Activated naive CD4-positive, alpha-beta T cell treated with anti-CD3 and anti-CD28 coated beads, Interleukin-2, amount 10 ng/mL, durations not matched to agents 7 days and 5 days (primary cell): ENCODE measurements at regions of chr18 and their contacts with region 1.

Region 1: GRCh38 chr18:8654503-8655451 is 45.5 kb downstream of the RAB12 start:
- DNase-seq: no peak
- H3K4me3 Mint-ChIP-seq: no peak overlapping the region
- H3K27ac Mint-ChIP-seq: no peak overlapping the region
- H3K4me1 Mint-ChIP-seq: no peaks in the 10 kb centered on the region
- H3K27me3 Mint-ChIP-seq: peaks cover 22% of the 10 kb centered on the region

Region 2: GRCh38 chr18:8643326-8643878 is 11.4 kb before region 1 on chr18:
- CTCF ChIA-PET with region 1: interaction called, 17 read pairs
- DNase-seq: no peak
- H3K4me3 Mint-ChIP-seq: no peak overlapping the region
- H3K27ac Mint-ChIP-seq: no peak overlapping the region
- H3K4me1 Mint-ChIP-seq: no peaks in the 10 kb centered on the region
- H3K27me3 Mint-ChIP-seq: peaks cover 14% of the 10 kb centered on the region

Region 3: DNA sequence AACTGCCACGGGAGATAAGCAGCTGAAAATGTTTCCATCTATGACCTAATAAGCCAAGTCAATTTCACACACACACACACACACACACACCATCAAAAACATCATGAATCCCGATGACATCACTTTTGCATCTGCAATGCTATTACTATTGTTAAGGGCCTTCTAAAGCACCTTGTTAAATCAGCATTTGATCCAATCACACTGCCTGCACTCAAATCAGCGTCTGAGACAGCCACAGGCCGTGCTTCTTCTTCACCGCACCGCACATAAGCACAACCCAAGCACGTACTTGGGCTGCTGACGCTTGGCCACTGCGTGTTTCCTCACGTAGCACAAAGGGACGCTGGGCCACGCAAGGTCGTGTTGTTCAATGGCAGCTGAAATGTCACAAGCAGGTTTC is 34.7 kb after region 1 on chr18:
- CTCF ChIA-PET with region 1: no interaction called
- DNase-seq: no peak
- H3K4me3 Mint-ChIP-seq: no peak overlapping the region
- H3K27ac Mint-ChIP-seq: no peak overlapping the region
- H3K4me1 Mint-ChIP-seq: no peaks in the 10 kb centered on the region
- H3K27me3 Mint-ChIP-seq: peaks cover 22% of the 10 kb centered on the region

Region 4: DNA sequence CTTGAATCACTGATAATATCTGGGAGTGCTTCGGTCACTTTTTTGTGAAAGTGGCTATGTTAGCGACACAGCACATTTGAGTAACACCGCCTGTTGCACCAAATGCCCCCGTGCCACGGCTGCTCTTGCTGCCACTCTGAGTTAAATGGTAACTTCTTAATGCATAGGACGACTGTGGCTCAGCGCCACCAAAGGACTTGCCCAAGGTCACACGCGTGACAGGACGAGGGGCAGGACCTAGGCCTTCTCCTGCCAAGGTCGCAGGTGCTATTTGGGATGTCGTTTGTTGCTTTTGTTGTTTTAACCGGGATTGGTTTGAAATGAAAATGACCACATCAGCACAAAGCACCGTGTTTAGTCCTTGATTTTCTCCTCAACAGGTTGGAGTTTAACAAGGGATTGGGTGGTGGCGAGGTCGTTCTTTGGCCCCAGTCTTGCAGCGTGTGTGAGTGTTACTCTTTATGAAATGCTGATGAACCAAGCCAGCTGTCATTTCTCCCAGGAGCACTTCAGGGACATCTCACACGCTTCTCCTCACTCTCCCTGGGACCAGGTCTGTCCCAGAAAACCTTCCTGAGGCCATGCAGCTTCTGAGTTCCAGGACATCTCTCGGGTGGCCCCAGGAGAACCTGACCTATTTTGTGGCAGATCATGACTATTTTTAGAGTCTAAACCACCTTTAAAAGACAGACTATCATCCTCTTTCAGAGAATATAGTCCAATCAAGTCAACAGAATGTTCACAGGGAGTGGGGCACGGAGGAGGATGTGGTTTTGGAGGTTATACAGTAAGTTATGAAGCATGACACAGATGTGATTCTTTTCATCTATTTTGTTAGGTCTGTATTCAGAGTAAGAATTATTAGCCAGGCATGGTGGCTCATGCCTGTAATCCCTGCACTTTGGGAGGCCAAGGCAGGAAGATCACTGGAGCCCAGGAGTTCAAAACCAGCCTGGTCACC is 100.5 kb after region 1 on chr18:
- CTCF ChIA-PET with region 1: no interaction called
- DNase-seq: peak; percentile 86
- H3K4me3 Mint-ChIP-seq: peak overlapping the region; percentile 54
- H3K27ac Mint-ChIP-seq: peak overlapping the region; percentile 94
- H3K4me1 Mint-ChIP-seq: peaks cover 66% of the 10 kb centered on the region
- H3K27me3 Mint-ChIP-seq: peaks cover 44% of the 10 kb centered on the region

Region 5: DNA sequence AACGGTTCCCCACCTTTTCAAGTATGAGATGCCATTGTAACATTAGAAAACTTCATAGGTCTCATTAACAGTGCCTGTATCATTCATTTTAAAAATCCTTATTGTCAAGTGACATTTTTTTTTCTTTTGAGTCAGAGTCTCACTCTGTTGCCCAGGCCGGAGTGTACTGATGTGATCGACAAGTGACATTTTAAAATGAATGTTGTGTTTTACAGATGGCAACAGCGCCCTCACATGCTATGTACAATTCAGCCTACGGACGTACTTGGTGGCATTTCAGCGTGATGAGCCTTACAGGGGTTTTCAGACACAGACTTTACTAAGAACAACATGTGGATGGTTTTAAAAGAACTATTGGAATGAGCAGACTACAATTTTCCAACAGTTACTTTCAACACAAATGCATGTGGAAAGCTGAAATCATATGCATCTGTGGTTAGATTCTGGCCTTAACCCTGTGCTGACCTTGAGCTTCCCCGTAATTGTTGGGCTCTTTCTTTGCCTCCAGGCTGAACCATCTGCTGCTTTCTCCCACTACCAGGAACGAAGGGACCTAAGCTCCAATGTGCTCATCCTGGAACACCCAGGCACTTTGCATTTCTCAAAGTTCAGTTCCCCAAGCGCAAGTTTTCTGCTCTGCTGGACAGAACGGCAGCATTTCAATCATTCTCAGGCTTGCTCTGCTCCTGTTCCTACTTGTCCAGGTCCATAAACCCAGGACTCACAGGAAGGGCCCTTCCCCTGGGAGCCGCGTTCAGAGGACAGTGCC is 327.8 kb after region 1 on chr18:
- CTCF ChIA-PET with region 1: interaction called, 32 read pairs
- DNase-seq: peak; percentile 49
- H3K4me3 Mint-ChIP-seq: no peak overlapping the region
- H3K27ac Mint-ChIP-seq: no peak overlapping the region
- H3K4me1 Mint-ChIP-seq: no peaks in the 10 kb centered on the region
- H3K27me3 Mint-ChIP-seq: peaks cover 30% of the 10 kb centered on the region

Region 6: DNA sequence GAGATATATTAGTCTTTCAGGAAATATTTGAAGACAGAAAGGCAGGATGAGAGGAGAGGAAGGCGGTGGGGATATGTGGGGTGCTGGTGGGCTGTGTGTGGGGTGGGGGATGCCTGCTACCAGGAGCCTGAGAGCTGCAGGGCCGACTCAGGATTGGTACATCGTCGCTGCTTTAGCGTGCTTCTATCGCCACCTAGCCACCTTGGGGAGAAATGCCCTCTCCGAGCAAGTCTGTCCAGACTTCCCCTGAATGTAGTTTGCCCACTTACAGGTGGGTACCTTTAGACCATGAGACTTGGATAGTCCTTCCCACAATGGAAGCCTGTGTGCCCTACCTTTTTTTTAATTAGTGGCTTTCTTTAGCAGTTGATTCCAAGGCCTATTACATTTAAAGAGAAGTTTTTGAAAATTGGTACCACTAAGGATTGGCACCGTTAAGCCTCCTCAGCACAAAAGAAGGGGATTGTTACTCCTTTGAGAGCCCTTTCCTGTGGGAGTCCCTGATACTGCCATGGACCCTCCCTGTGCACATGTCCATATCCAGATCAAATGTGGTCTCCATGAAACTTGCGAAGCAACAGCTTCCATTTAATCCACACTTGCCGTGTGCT is 333.6 kb after region 1 on chr18:
- CTCF ChIA-PET with region 1: interaction called, 32 read pairs
- DNase-seq: peak; percentile 67
- H3K4me3 Mint-ChIP-seq: no peak overlapping the region
- H3K27ac Mint-ChIP-seq: no peak overlapping the region
- H3K4me1 Mint-ChIP-seq: no peaks in the 10 kb centered on the region
- H3K27me3 Mint-ChIP-seq: peaks cover 32% of the 10 kb centered on the region